ENCODE measurements at regions of chr19 and their contacts with region 1.

Region 1: DNA sequence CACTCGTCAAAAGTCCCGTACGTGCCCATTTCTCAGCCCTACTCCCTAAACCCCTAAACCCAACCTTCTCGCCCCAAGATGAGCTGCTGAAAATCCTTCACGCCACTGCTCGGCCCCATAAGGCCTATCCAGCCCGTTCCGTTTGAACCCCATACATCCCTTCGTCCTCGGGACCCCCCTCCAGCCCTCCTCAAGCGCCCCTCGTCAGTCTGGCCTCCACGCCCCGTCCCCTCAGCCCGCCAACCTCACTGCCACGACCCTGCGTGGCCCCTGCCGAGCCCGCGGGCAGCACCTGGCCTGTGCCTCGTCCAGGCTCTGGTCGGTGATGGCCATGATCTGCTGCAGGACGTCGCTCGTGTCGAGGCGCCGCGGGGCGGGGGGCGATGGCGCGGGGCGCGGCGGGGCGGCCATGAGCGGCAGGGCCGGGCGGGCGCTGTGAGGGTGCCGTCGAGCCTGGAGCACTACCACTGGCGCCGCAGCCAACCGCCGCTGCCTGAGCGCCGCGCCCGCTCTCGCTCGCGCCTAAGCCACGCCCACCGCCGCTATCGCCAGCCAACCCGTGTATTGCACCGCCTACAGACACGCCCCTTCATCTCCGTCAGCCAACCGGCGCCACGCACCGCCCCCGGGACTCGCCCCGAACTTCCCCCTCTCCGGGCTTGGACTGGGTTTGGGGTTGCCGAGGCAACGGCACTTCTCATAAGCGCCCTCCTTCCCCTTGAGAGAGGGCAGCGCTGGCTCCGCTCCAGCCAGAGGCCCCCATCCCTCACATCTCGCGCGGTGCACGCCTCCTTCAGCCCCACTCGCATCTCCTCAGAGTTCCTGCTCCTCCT is at the start of gene PBX4:
- DNase-seq: peak; percentile 98 to 100 (median 99)
- ATAC-seq: peak; percentile 94
- H3K4me3 ChIP-seq: peak within 1 kb of the TSS; percentile 79
- H3K4me3 Mint-ChIP-seq: peak within 1 kb of the TSS; percentile 92
- H3K27ac ChIP-seq: peak within 1 kb of the TSS; percentile 56 to 70
- H3K27ac Mint-ChIP-seq: peak within 1 kb of the TSS; percentile 82
- H3K4me1 ChIP-seq: peaks cover 57% of the 10 kb centered on the region
- H3K4me1 Mint-ChIP-seq: peaks cover 49% of the 10 kb centered on the region
- H3K27me3 ChIP-seq: no peaks in the 10 kb centered on the region
- H3K27me3 Mint-ChIP-seq: no peaks in the 10 kb centered on the region
- CTCF ChIP-seq: no peak
- total RNA-seq, gene PBX4: 50.1 to 51.8 TPM

Region 2: GRCh38 chr19:19420570-19421298 is 197.7 kb before region 1 on chr19:
- CTCF ChIA-PET with region 1: no interaction called
- POLR2A ChIA-PET with region 1: no interaction called
- intact Hi-C with region 1: no loop called
- DNase-seq: peak in 4 of 14 experiments; percentile 24 to 76 (median 68)
- ATAC-seq: peak; percentile 58
- H3K4me3 ChIP-seq: no peak overlapping the region
- H3K4me3 Mint-ChIP-seq: no peak overlapping the region
- H3K27ac ChIP-seq: no peak overlapping the region
- H3K27ac Mint-ChIP-seq: peak overlapping the region; percentile 68
- H3K4me1 ChIP-seq: peaks cover 92% of the 10 kb centered on the region
- H3K4me1 Mint-ChIP-seq: peaks cover 80% of the 10 kb centered on the region
- H3K27me3 ChIP-seq: no peaks in the 10 kb centered on the region
- H3K27me3 Mint-ChIP-seq: no peaks in the 10 kb centered on the region
- CTCF ChIP-seq: no peak

Region 3: DNA sequence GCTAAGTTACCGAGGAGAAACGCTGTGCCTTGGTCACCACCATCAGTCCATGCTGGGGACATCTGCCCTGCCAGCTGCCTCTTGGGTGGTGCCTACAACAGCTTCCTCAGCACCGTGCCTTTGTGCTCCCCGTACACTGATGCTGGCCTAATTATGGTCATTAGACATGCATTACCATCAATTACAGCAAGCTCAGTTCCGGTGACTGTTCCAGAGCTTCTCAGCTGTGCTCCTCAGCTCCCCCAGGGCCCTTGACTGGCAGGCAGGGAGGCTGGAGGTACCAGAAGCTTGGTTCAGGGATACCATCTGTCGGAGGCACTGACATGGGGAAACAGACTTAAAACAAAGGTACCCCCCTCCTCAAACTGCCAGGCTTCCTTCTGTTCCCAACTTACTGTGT is 40.2 kb before region 1 on chr19:
- CTCF ChIA-PET with region 1: no interaction called
- POLR2A ChIA-PET with region 1: no interaction called
- intact Hi-C with region 1: loop called in 1 of 2 experiments (anchors 5 kb)
- DNase-seq: no peak
- ATAC-seq: no peak
- H3K4me3 ChIP-seq: no peak overlapping the region
- H3K4me3 Mint-ChIP-seq: no peak overlapping the region
- H3K27ac ChIP-seq: no peak overlapping the region
- H3K27ac Mint-ChIP-seq: no peak overlapping the region
- H3K4me1 ChIP-seq: peaks cover 22% of the 10 kb centered on the region
- H3K4me1 Mint-ChIP-seq: peaks cover 6% of the 10 kb centered on the region
- H3K27me3 ChIP-seq: no peaks in the 10 kb centered on the region
- H3K27me3 Mint-ChIP-seq: no peaks in the 10 kb centered on the region
- CTCF ChIP-seq: no peak

Region 4: DNA sequence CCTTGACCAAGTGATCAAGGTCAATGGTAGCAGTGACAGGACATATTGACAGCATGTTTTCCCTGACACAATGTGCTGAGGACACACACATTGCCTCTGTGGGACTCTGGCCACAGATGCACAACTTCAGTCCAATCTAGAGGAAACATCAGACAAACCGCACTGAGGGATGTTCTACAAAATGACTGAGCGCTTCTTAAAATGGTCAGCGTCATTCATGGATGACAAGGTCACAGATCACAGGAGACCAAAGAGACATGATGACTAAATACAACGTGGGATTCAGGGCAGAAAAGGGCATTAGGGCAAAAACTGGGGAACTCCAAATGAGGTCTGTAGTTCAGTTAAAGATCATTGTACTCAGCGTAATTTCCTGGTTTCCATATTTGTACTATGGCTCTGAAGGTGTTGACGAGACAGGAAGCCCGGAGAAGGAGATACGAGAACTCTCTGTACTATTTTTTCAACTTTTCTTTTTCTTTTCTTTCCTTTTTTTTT is 20.6 kb before region 1 on chr19:
- CTCF ChIA-PET with region 1: no interaction called
- POLR2A ChIA-PET with region 1: interaction called, 6 read pairs
- intact Hi-C with region 1: loop called in 1 of 2 experiments (anchors 1 kb)
- DNase-seq: peak in 10 of 14 experiments; percentile 20 to 96 (median 40)
- ATAC-seq: peak; percentile 73
- H3K4me3 ChIP-seq: no peak overlapping the region
- H3K4me3 Mint-ChIP-seq: peak overlapping the region; percentile 55
- H3K27ac ChIP-seq: peak overlapping the region; percentile 94 to 97
- H3K27ac Mint-ChIP-seq: peak overlapping the region; percentile 95
- H3K4me1 ChIP-seq: peaks cover 96% of the 10 kb centered on the region
- H3K4me1 Mint-ChIP-seq: peaks cover 62% of the 10 kb centered on the region
- H3K27me3 ChIP-seq: no peaks in the 10 kb centered on the region
- H3K27me3 Mint-ChIP-seq: no peaks in the 10 kb centered on the region
- CTCF ChIP-seq: no peak